ENCODE measurements at regions of chr6 and their contacts with region 1.

Region 1: GRCh38 chr6:103396768-103397167 is 1463.0 kb downstream of the HACE1 start:
- DNase-seq: no peak
- ATAC-seq: no peak
- H3K4me3 Mint-ChIP-seq: no peak overlapping the region
- H3K27ac Mint-ChIP-seq: no peak overlapping the region
- H3K4me1 Mint-ChIP-seq: no peaks in the 10 kb centered on the region
- H3K27me3 Mint-ChIP-seq: no peaks in the 10 kb centered on the region

Region 2: DNA sequence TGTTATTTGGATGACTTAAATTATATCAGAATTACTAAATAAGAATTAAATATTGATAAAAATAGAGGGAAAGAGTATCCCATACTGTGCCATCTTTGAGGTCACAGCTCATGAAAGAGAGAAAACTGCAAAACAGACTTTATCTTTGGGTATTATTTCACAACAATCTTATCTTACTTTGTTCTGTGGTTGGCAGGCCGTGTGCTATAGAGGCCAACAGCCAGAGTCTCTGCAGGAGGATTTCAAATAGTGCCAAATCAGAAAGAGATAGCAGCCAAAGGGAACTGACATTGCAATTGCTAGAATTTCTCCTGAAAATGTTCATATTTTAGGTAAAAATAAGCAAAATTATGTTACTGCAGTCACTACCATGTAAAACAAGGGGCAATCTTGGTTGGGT is 1649.1 kb before region 1 on chr6:
- CTCF ChIA-PET with region 1: no interaction called
- POLR2A ChIA-PET with region 1: no interaction called
- intact Hi-C with region 1: loop called in 1 of 2 experiments (anchors 10 kb)
- DNase-seq: no peak
- ATAC-seq: no peak
- H3K4me3 Mint-ChIP-seq: no peak overlapping the region
- H3K27ac Mint-ChIP-seq: no peak overlapping the region
- H3K4me1 Mint-ChIP-seq: no peaks in the 10 kb centered on the region
- H3K27me3 Mint-ChIP-seq: no peaks in the 10 kb centered on the region

Region 3: DNA sequence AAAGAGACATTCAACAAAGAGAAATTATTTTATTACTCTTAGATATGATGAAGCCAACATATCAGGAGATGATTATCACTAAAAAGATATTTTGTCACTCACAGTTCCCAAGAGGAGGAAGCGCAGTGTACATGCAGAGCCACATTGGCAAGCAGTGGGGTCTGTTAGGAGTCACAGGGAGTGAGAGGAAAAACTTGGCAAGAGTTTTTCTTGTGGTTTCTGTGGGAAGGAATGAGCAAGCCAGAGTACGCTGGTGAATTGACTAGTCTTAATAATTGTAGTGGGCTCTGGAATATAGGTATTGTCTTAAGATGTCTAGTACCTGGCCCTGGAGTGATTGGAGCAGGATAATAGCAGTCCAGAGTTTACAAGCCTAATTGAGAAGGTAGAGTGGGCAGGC is 908.0 kb before region 1 on chr6:
- CTCF ChIA-PET with region 1: no interaction called
- POLR2A ChIA-PET with region 1: no interaction called
- intact Hi-C with region 1: no loop called
- DNase-seq: no peak
- ATAC-seq: no peak
- H3K4me3 Mint-ChIP-seq: no peak overlapping the region
- H3K27ac Mint-ChIP-seq: no peak overlapping the region
- H3K4me1 Mint-ChIP-seq: no peaks in the 10 kb centered on the region
- H3K27me3 Mint-ChIP-seq: no peaks in the 10 kb centered on the region

Measured in activated CD4-positive, alpha-beta T cell treated with anti-CD3 and anti-CD28 coated beads for 36 hours (primary cell).